ENCODE measurements at regions of chr19 and their contacts with region 1.

Region 1: GRCh38 chr19:17775245-17775916 is 19.6 kb upstream of the B3GNT3 start:
- DNase-seq: no peak
- ATAC-seq: no peak
- H3K4me3 Mint-ChIP-seq: peak overlapping the region; percentile 82
- H3K27ac Mint-ChIP-seq: peak overlapping the region; percentile 99
- H3K4me1 Mint-ChIP-seq: peaks cover 48% of the 10 kb centered on the region
- H3K27me3 Mint-ChIP-seq: no peaks in the 10 kb centered on the region
- CTCF ChIP-seq: no peak

Region 2: DNA sequence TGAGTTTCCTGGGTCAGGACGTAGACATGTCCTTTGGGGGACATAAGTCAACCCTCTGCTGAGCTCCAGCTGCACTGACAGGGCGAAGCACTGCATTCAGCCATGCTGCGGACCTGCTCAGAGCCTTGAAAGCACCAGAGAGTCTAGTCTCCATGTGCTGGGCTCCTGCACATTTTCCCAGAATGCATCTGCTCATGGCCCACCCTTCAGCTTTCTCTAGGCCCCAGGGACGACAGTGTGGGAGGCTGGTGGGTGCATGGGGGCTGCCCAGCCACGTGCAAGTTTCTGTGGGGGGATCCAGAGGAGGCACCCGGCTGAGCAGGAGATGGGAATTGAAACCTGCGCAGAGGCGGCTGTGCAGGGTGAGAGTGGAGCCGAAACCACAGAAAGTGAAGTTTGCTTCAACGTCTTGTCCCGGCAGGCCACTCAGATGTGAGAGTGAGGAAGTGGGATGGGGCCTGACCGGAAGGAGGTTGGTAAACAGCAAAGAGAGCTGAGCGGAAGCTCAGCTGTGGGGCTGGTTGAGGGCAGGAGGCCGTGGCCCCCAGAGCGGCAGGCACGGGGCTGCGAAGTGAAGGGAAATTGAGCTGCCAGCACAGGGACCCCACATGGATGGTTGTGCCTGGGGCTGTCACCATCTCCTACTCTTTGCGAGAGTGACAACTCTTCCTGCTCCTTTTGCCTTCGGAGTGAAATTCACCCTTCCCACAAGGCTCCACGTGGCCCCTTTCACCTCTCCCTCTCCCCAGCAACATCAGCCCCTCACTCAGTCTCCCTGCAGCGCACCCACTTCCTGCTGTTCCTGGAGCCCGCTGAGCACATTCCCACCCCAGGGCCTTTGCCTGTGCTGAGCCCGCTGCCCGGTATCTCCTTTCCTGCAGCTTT is 252.2 kb before region 1 on chr19:
- CTCF ChIA-PET with region 1: no interaction called
- POLR2A ChIA-PET with region 1: interaction called, 9 read pairs
- intact Hi-C with region 1: loop called (anchors 1 kb)
- DNase-seq: peak; percentile 79
- ATAC-seq: peak; percentile 77
- H3K4me3 Mint-ChIP-seq: peak overlapping the region; percentile 76
- H3K27ac Mint-ChIP-seq: peak overlapping the region; percentile 94
- H3K4me1 Mint-ChIP-seq: peaks cover 67% of the 10 kb centered on the region
- H3K27me3 Mint-ChIP-seq: no peaks in the 10 kb centered on the region
- CTCF ChIP-seq: no peak

Region 3: DNA sequence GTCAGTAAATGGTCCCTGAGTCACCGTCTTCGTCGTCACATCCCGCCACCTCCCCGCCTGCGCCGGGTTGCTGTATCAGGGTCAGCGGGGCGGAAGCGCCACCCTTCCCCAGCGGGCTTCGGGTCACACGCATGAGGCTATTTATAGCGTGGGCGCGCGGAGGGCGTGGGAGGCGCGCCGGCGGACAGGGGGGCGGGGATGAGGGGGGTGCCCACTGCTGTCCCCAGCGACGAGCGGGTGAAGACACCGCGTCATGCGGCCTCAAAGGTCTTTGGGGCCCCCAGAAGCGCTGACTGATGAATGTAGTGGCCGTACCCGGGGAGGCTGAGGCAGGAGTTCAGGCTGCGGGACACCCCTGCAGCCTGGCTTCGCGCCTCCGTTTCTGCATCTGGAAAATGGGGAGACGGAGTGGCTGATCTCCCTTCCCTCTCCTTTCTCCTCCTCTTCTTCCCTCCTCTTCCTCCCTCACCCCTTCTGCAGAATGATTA is 95.1 kb before region 1 on chr19:
- CTCF ChIA-PET with region 1: no interaction called
- POLR2A ChIA-PET with region 1: no interaction called
- intact Hi-C with region 1: no loop called
- DNase-seq: peak; percentile 61
- ATAC-seq: peak; percentile 90
- H3K4me3 Mint-ChIP-seq: peak overlapping the region; percentile 73
- H3K27ac Mint-ChIP-seq: peak overlapping the region; percentile 30
- H3K4me1 Mint-ChIP-seq: peaks cover 14% of the 10 kb centered on the region
- H3K27me3 Mint-ChIP-seq: peaks cover 55% of the 10 kb centered on the region
- CTCF ChIP-seq: no peak

Region 4: DNA sequence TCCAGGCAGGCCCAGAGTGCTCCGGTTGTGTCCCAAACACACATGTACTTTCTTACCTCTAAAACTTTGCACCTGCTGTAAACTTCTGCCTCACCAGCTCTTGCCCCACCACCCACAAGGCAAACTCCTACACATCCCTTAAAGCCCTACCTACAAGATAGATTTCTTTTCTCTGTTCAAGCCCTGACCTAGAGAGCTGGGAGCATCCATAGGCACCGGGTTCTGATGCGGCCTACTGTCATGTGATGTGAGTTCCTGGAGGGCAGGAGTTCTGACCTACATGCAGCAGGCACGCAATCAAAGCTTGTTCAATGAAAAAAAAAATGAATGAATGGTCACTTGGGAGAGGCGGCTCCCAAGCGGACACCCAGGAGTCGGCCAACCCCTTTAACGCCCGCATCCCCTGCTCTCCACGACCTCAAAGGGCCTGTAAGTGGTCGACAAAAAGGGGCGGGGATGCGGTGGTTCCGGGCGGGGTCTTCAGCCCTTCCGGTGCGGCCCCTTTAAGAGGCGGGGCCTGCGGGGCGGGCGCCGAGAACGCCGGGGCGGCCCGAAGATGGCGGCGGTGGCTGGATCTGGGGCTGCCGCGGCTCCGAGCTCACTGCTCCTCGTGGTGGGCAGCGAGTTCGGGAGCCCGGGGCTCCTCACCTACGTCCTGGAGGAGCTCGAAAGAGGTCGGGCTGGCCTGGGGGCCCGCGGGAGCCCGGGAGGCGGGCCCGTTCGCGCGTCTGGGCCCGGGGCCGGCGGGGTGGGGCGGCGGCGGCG is 56.3 kb before region 1 on chr19 and contains the start of gene MAP1S:
- CTCF ChIA-PET with region 1: no interaction called
- POLR2A ChIA-PET with region 1: interaction called, 7 read pairs
- intact Hi-C with region 1: loop called (anchors 1 kb)
- DNase-seq: peak; percentile 74
- ATAC-seq: peak; percentile 91
- H3K4me3 Mint-ChIP-seq: peak within 1 kb of the TSS; percentile 89
- H3K27ac Mint-ChIP-seq: peak within 1 kb of the TSS; percentile 77
- H3K4me1 Mint-ChIP-seq: peaks cover 38% of the 10 kb centered on the region
- H3K27me3 Mint-ChIP-seq: no peaks in the 10 kb centered on the region
- CTCF ChIP-seq: no peak
- total RNA-seq, gene MAP1S: 65.6 and 80.5 TPM in 2 replicates

Region 5: DNA sequence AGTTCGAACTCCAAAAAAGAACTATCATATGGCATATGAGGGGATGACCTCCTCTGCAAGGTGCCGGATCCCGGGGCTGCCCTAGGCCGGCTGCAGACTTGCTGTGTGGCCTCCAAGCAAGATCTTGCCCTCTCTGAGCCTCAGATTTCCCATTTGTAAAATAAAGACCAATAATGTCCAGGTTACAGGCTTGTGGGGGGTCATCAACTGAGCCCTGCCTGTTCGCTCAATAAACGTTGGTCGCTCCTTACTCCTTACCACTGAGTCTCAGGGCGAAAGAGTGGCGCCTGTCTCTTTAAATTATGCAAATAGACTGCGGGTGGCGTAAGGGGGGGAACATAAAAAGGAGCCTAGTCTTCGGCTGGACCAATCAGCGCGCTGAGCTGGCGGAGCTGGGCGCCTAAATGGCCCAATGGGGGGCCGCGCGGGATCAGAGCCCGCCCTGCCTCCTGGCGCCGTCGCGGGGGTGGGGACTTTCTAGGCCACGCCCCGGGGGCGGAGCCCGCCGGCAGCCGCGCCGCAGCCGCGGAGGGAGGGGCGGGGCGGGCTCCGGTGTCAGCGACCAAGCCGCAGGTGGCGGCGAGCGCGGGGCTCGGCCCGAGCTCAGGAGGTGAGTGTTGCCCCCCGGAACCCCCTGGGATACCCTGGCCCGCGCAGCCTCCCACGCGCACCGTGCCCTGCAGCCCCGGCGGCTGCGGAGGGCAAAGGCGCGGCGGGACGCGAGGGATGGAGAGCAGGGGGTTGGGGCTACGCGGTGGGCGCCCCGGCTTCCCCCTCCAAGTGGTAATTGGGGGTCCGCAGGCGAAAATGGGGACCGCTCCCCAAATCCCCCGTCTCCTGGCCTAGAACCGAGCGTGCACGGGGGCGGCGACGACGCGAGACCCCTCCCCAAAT is 27.9 kb before region 1 on chr19:
- CTCF ChIA-PET with region 1: interaction called, 3 read pairs
- POLR2A ChIA-PET with region 1: interaction called, 109 read pairs
- intact Hi-C with region 1: loop called (anchors 1 kb)
- DNase-seq: peak; percentile 97
- ATAC-seq: peak; percentile 83
- H3K4me3 Mint-ChIP-seq: peak overlapping the region; percentile 79
- H3K27ac Mint-ChIP-seq: peak overlapping the region; percentile 70
- H3K4me1 Mint-ChIP-seq: peaks cover 59% of the 10 kb centered on the region
- H3K27me3 Mint-ChIP-seq: no peaks in the 10 kb centered on the region
- CTCF ChIP-seq: no peak

Region 6: DNA sequence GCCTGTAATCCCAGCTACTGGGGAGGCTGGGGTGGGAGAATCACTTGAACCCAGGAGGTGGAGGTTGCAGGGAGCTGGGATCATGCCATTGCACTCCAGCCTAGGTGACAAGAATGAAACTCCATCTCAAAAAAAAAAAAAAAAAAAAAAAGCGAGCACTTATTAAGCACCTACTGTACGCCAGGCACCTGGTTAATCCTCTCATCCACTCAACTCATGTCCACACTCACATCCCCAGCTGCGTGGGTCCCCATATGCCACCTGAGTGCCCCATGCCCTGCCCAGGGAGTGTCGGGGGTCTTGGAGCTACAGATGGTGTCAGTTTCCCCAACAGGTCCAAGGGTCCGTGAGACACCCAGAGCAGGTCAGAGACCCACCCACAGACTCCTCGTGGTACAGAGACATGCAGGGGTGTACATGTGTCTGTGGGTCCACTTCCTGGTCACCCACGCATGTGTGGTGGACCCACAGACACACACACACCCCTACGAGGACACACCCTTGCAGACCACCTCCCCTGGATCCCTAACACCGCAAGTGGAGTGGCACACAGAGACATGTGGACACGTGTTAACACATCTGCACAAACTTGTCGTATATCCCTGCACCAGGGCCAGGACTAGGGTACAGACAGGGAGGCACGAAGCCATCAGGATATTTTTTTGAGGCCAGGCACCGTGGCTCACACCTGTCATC is 42.4 kb after region 1 on chr19:
- CTCF ChIA-PET with region 1: no interaction called
- POLR2A ChIA-PET with region 1: interaction called, 15 read pairs
- intact Hi-C with region 1: no loop called
- DNase-seq: no peak
- ATAC-seq: no peak
- H3K4me3 Mint-ChIP-seq: no peak overlapping the region
- H3K27ac Mint-ChIP-seq: no peak overlapping the region
- H3K4me1 Mint-ChIP-seq: no peaks in the 10 kb centered on the region
- H3K27me3 Mint-ChIP-seq: no peaks in the 10 kb centered on the region
- CTCF ChIP-seq: no peak

Region 7: DNA sequence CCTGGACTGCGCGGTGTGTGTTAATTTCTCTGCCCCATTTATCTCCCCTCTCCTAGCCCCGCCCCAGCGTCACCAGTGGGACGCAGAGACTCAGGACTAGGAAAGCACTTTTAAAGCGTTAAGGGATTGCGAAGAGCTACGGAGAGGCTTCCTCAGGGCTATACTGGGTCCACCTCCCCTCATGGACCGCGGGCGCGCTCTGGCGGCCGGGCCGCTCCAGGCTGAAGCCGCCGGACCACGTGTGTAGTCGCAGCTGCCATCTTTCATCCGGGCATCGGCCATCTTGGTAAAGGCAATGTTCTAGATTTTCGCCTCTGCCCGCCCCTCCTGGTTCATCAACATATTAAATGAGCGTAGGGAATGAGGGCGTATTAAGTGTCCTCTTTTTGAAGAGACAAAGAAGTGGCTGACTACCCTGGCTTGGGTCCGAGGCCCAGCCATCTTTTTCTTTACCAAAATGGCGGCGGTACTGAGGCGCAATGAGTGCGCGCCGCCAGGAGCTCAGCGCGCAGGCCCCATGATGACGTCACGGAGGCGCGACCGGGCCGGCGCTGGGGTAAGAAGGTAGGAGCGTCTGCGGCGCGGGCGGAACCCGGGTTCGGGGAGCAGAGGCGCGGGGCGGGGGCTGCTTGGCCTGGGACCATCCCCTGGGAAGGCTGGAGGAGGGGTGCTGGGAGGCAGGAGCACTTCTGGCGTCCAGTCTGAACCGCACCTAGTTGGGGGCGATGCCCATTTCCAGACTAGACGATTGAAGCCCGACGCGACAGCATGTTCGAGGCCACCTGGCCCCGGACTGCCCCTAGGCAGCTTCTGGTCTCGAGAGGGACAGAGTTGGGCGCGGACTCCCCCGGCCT is 157.3 kb after region 1 on chr19 and contains the start of gene CCDC124:
- CTCF ChIA-PET with region 1: interaction called, 6 read pairs
- POLR2A ChIA-PET with region 1: interaction called, 5 read pairs
- intact Hi-C with region 1: loop called (anchors 5 kb)
- DNase-seq: peak; percentile 87
- ATAC-seq: peak; percentile 96
- H3K4me3 Mint-ChIP-seq: peak within 1 kb of the TSS; percentile 88
- H3K27ac Mint-ChIP-seq: peak within 1 kb of the TSS; percentile 94
- H3K4me1 Mint-ChIP-seq: peaks cover 25% of the 10 kb centered on the region
- H3K27me3 Mint-ChIP-seq: no peaks in the 10 kb centered on the region
- CTCF ChIP-seq: no peak
- total RNA-seq, gene CCDC124: 49.9 and 59.5 TPM in 2 replicates

Region 8: GRCh38 chr19:18117692-18118378 is 342.5 kb after region 1 on chr19:
- CTCF ChIA-PET with region 1: no interaction called
- POLR2A ChIA-PET with region 1: no interaction called
- intact Hi-C with region 1: no loop called
- DNase-seq: peak; percentile 98
- ATAC-seq: peak; percentile 93
- H3K4me3 Mint-ChIP-seq: peak overlapping the region; percentile 75
- H3K27ac Mint-ChIP-seq: peak overlapping the region; percentile 77
- H3K4me1 Mint-ChIP-seq: peaks cover 40% of the 10 kb centered on the region
- H3K27me3 Mint-ChIP-seq: no peaks in the 10 kb centered on the region
- CTCF ChIP-seq: no peak